Heart right ventricle (tissue), 16 donors: ENCODE measurements at regions of chr5 and their contacts with region 1.

Region 1: GRCh38 chr5:717143-717542 is 24.0 kb upstream of the TPPP start:
- DNase-seq: no peak
- ATAC-seq: no peak
- H3K4me3 ChIP-seq: no peak overlapping the region
- H3K27ac ChIP-seq: no peak overlapping the region
- H3K4me1 ChIP-seq: no peaks in the 10 kb centered on the region
- H3K27me3 ChIP-seq: no peaks in the 10 kb centered on the region
- CTCF ChIP-seq: no peak

Region 2: DNA sequence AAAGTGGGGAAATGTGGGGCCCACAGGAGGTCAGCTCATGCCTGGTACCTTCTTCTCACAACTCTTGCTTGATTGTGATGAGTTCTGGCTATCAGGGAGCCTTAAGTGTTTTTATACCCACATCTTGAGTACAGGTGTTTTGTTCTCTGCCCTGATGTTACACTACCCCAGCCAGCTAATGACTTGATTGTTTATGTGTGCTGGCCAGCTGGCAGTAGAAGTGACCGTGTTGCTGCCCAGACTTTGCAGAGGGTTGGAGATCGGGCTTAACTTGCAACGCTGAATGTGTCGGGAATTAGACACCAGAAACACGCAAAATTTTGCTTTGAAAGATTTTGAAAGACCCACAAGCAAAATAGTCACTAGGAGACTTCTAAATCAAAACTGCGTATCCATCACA is 84.3 kb after region 1 on chr5:
- intact Hi-C with region 1: loop called in 1 of 10 experiments (anchors 10 kb)
- DNase-seq: no peak
- ATAC-seq: no peak
- H3K4me3 ChIP-seq: no peak overlapping the region
- H3K27ac ChIP-seq: no peak overlapping the region
- H3K4me1 ChIP-seq: no peaks in the 10 kb centered on the region
- H3K27me3 ChIP-seq: no peaks in the 10 kb centered on the region
- CTCF ChIP-seq: no peak